ENCODE measurements at regions of chr11 and their contacts with region 1.

Region 1: DNA sequence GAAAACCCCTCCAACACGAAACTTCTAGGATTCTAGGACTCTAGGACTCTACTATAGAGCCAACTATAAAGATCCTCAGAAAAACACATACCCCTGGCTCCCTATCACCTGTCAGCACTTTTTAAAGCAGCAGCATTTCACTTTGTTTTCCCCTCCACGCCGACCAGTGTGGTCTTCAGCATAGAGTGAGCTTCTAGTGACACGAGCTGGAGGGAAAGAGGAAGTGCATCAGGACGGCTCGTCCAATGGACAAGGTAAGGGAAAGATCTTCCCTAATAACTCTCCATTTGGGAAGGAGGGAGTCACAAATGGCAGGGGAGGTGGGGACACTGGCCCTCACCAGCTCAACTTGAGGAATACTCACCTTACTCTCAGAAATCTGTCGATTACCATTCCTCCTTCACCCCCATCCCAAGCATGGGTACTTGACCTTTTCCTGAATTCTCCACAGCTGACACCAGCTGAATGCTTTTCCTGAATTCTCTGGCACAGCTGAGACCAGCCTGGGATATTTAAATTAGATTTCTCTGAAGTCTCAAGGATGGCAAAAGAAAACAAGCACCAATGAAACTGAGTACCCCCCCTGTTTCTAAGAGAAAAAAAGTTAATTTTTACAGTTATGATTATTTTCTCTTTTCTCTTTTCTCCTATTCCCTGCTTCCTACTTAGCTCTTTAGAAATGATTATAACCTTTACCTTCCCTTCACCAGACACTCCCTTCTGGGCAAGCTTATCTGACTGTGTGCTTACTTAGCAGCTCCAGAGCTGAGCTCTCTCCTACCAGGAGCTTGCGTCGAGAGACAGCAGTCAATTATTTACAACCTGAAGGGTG is 33.3 kb upstream of the NNMT start:
- DNase-seq: peak in 5 of 10 donors; percentile 43 to 90 (median 44)

Region 2: GRCh38 chr11:113305440-113306336 is 957.2 kb before region 1 on chr11:
- intact Hi-C with region 1: loop called (anchors 5 kb)
- DNase-seq: peak; percentile 68 to 97 (median 87)

Region 3: GRCh38 chr11:113806406-113806805 is 456.5 kb before region 1 on chr11:
- intact Hi-C with region 1: loop called (anchors 5 kb)
- DNase-seq: no peak

Region 4: DNA sequence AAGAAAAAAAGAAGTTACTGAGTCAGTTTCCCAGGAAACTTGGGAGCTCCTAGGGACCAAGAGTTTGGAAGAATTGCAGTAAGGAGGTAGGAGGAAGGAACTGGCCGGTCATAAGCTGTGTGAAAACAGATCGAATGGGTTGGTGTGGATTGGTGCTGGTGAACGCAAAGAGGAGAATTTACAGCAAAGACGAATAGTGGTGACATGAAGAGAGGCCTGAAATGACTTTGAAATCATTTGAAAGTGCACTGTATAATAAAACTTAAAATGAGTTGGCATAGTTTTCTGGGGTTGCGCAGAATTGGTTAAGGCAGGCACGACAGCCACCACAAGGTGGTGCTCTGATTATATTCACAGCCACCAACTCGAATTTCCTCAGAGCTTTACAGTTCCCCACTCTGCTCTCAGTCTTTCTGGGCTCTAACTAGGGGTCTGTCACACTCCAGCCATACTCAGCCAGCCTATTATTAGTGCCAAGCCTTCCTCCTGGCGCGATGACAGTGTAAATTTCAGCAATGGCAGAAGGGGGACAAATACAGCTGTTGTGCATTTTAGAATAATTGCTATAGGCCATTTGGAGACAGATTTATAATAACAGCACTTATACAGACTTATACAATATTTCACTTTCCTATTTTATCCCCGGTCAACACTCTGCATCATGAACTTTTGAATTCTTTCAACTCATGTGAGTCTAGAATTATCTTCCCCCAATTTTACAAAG is 366.6 kb before region 1 on chr11:
- intact Hi-C with region 1: loop called (anchors 1 kb)
- DNase-seq: peak in 6 of 10 donors; percentile 25 to 90 (median 36)

Region 5: GRCh38 chr11:113994077-113994954 is 268.6 kb before region 1 on chr11:
- intact Hi-C with region 1: loop called (anchors 1 kb)
- DNase-seq: peak in 5 of 10 donors; percentile 22 to 72 (median 40)

Region 6: GRCh38 chr11:114036156-114036811 is 226.6 kb before region 1 on chr11:
- intact Hi-C with region 1: loop called (anchors 1 kb)
- DNase-seq: peak; percentile 55 to 96 (median 75)

Region 7: DNA sequence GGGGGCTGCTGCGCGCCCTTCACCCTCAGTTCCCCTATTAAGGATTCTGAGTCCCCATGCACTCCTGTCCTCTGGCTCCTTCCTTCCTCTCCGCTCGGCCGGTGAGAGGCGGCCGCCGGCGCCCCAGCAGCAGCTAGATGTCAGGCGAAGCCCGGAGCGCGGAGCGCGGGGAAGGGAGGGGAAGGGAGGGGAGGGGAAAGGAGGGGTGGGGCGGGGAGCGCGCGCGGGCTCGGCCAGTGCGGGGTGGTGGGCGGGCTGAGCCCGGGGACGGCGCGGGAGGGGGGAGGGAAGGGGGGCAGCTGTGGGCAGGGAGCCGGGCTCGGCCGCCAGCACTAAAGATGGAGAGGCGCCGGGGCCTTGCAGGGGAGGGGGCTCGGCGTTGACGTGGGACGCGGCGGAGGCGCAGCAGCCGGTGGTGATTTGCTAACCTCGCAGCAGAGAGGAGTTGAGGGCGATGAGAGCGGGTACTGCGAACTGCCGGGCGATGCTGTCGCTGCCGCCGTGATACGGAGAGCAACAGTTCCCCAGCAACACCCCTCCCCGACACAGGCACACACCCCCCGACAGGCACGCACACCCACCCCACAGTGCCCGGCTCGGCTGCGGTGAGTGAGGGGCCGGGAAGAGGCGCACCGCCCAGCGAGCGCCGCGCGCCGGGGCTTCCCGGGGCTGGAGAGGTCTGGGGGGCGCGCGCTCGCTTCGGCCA is 203.5 kb before region 1 on chr11 and contains the start of gene ZBTB16:
- intact Hi-C with region 1: loop called (anchors 1 kb)
- DNase-seq: peak; percentile 81 to 99 (median 92)

Region 8: GRCh38 chr11:114447892-114448291 is 185.0 kb after region 1 on chr11:
- intact Hi-C with region 1: no loop called
- DNase-seq: no peak

Measured in posterior cingulate gyrus (tissue), 11 donors.